Cardiac septum (tissue), 1 donor: ENCODE measurements at regions of chr12 and their contacts with region 1.

Region 1: DNA sequence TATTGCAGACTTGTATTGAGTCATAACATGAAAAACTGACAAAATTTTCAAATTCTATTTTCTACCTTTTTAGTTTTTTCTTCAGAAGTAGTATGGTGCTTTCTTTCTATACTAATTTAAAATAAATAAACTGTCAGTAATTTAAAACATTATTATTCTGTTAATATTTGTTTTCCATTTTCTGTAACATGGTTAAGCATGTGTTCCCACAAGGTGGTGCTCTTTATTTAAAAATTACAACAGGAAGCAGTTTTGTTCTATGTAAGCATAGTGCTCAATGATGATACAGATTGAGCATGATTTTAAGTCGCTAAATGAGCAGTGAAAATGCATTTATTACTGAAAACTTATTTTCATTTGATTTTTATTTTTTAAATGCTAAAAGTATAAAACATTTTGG is 114.6 kb downstream of the PPFIA2 start:
- DNase-seq: no peak

Region 2: GRCh38 chr12:81722004-81722403 is 77.5 kb after region 1 on chr12:
- intact Hi-C with region 1: no loop called
- DNase-seq: no peak

Region 3: DNA sequence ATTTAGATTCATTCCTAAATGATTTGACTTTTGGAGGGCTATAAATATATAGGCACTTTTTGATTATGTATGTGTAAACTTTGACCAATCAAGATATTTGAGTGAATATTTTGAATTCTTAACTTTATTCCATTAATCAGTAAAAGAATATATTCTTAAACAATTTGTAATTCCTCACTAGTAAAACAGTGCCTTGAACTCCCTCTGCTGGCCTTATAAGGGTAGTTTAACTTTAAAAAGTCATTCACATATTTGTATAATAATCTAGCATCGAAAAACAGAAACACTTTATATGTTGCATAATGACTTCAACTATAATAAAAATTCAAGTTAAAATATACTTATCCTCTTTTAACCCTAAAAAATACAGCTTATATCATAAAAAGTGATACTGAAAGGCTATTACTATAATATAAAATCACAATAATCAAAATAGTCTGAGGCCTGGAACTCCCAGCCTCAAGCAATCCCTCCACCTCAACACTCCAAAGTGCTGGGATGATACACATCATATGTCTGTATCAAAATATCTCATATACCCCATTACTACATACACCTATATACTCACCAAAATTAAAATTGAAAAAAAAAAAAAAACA is 682.5 kb after region 1 on chr12:
- intact Hi-C with region 1: loop called (anchors 5 kb)
- DNase-seq: no peak